Activated B cell treated with CpG ODN at 0.5 μM for 24 hours (primary cell): ENCODE measurements at regions of chr4 and their contacts with region 1.

Region 1: GRCh38 chr4:121112530-121112929 is 40.2 kb upstream of the NDNF start:
- DNase-seq: no peak
- ATAC-seq: no peak
- H3K4me3 Mint-ChIP-seq: no peak overlapping the region
- H3K27ac Mint-ChIP-seq: no peak overlapping the region
- H3K4me1 Mint-ChIP-seq: no peaks in the 10 kb centered on the region
- H3K27me3 Mint-ChIP-seq: peaks cover 4% of the 10 kb centered on the region
- CTCF ChIP-seq: no peak

Region 2: GRCh38 chr4:120156120-120156718 is 956.3 kb before region 1 on chr4:
- CTCF ChIA-PET with region 1: interaction called, 3 read pairs
- POLR2A ChIA-PET with region 1: no interaction called
- intact Hi-C with region 1: loop called (anchors 5 kb)
- DNase-seq: no peak
- ATAC-seq: no peak
- H3K4me3 Mint-ChIP-seq: no peak overlapping the region
- H3K27ac Mint-ChIP-seq: no peak overlapping the region
- H3K4me1 Mint-ChIP-seq: no peaks in the 10 kb centered on the region
- H3K27me3 Mint-ChIP-seq: peaks cover 2% of the 10 kb centered on the region
- CTCF ChIP-seq: peak; percentile 68

Region 3: GRCh38 chr4:121096629-121097028 is 15.9 kb before region 1 on chr4:
- CTCF ChIA-PET with region 1: no interaction called
- POLR2A ChIA-PET with region 1: no interaction called
- intact Hi-C with region 1: no loop called
- DNase-seq: no peak
- ATAC-seq: no peak
- H3K4me3 Mint-ChIP-seq: no peak overlapping the region
- H3K27ac Mint-ChIP-seq: no peak overlapping the region
- H3K4me1 Mint-ChIP-seq: no peaks in the 10 kb centered on the region
- H3K27me3 Mint-ChIP-seq: no peaks in the 10 kb centered on the region
- CTCF ChIP-seq: no peak